ENCODE measurements at regions of chrX and their contacts with region 1.

Region 1: GRCh38 chrX:103817502-103817901 is 14.6 kb downstream of the RAB9B start:
- DNase-seq: peak; percentile 15
- ATAC-seq: peak; percentile 59
- H3K4me3 ChIP-seq: no peak overlapping the region
- H3K27ac ChIP-seq: no peak overlapping the region
- H3K4me1 ChIP-seq: no peaks in the 10 kb centered on the region
- H3K27me3 ChIP-seq: no peaks in the 10 kb centered on the region
- CTCF ChIP-seq: peak; percentile 40 to 44 (median 42); a peak in 4 of 6 replicates
- POLR2A ChIP-seq: no peak
- RAD21 ChIP-seq: peak; percentile 51

Region 2: GRCh38 chrX:103711533-103712369 is 105.8 kb before region 1 on chrX:
- CTCF ChIA-PET with region 1: no interaction called
- POLR2A ChIA-PET with region 1: no interaction called
- RAD21 ChIA-PET with region 1: no interaction called
- intact Hi-C with region 1: loop called (anchors 1 kb)
- DNase-seq: peak; percentile 33
- ATAC-seq: peak; percentile 86
- H3K4me3 ChIP-seq: no peak overlapping the region
- H3K27ac ChIP-seq: no peak overlapping the region
- H3K4me1 ChIP-seq: no peaks in the 10 kb centered on the region
- H3K27me3 ChIP-seq: no peaks in the 10 kb centered on the region
- CTCF ChIP-seq: peak; percentile 31 to 72 (median 65); a peak in 5 of 6 replicates
- POLR2A ChIP-seq: no peak
- RAD21 ChIP-seq: peak; percentile 47

Region 3: GRCh38 chrX:104039689-104040505 is 222.4 kb after region 1 on chrX and contains the start of gene H2BW2:
- CTCF ChIA-PET with region 1: no interaction called
- POLR2A ChIA-PET with region 1: no interaction called
- RAD21 ChIA-PET with region 1: no interaction called
- intact Hi-C with region 1: no loop called
- DNase-seq: no peak
- ATAC-seq: no peak
- H3K4me3 ChIP-seq: no peak within 1 kb of the TSS
- H3K27ac ChIP-seq: no peak within 1 kb of the TSS
- H3K4me1 ChIP-seq: no peaks in the 10 kb centered on the region
- H3K27me3 ChIP-seq: peaks cover 16% of the 10 kb centered on the region
- CTCF ChIP-seq: no peak
- POLR2A ChIP-seq: no peak
- RAD21 ChIP-seq: no peak
- total RNA-seq, gene H2BW2: not detected